Gastrocnemius medialis (tissue), 4 donors: ENCODE measurements at regions of chr1 and their contacts with region 1.

Region 1: DNA sequence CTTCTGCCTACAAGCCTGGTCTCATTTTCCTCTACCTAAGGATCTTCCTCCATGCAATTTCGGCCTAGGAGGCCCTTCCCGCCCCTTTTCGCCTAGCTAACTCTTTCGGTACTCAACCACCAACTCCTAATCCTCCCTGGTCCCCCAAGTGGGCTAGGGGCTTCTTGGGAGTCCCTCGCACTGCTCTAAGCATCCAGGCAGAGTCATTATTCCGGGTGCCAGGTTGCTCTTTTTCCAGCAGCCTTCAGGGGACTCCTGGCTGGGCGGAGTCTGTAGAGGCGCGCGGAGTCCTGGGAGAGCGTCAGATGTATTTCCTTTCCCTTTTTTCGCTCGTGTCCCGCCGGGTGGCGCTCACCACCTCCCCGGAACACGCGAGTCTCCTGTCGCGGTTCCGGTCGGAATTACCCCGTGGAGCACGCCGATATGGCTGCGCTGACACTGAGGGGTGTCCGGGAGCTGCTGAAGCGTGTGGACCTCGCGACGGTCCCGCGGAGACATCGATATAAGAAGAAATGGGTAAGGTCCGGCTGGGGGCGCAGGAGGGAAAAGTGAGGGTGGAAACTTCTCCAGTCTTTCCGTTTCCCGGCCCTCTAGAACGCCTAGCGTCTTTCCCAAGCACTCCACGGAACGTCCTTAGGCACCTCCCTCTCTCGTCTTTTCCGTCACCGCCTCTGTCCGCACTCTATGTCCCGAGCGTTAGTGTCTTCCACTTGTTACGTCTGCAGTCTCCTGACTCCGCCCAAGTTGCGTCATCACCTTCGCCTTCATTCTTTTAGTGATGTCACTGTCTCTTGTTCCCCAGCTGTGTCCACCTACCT is at the start of gene NSUN4:
- DNase-seq: peak; percentile 88 to 93
- ATAC-seq: peak; percentile 94 to 96
- H3K4me3 ChIP-seq: peak within 1 kb of the TSS; percentile 66 to 83 (median 77)
- H3K27ac ChIP-seq: peak within 1 kb of the TSS; percentile 91 to 99 (median 94)
- H3K4me1 ChIP-seq: peaks cover 16 to 20% of the 10 kb centered on the region in 2 donors
- H3K27me3 ChIP-seq: no peaks in the 10 kb centered on the region
- CTCF ChIP-seq: peak; percentile 51 to 73 (median 62)
- POLR2A ChIP-seq: peak; percentile 86 to 89
- total RNA-seq, gene NSUN4: 15.5 to 22.5 (median 20.8) TPM

Region 2: DNA sequence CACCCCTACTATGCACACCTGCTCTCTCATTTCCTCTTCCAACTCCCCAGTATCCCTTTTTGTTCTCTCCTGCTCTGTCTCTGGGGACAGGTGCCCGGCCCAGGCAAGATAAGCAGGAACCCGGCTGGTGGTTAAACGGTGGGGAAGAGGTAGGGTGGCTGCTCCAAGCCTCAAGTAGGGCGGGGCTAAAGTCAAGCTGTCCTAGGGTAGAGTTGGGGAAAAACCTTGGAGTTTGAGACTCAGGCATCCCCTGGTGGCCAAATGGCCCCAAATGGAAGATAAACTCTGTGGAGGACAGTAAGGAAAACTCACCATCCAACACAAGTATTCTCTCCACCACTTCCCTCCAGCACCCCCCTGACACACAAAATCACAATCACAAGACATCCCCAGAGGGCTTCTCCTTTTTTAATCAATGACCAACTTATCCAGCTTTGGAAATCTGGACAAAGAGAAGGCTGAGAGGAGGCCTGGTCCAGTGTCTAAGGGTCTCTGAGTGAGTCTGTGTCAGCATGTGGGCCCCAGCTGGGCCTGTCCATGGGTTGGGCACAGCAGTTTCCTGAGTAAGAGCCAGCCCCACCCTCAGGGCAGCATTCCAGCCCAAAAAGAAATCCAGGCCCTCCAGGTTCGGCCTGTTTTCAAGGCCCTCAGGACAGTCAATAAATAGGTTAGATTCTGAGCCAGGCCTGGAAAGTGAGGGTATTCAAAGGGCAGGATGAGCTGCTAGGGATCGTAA is 152.2 kb before region 1 on chr1:
- in situ Hi-C with region 1: no loop called
- intact Hi-C with region 1: no loop called
- DNase-seq: no peak
- ATAC-seq: no peak
- H3K4me3 ChIP-seq: no peak overlapping the region
- H3K27ac ChIP-seq: peak overlapping the region in 3 of 4 donors; percentile 10 to 55 (median 37)
- H3K4me1 ChIP-seq: peaks cover 6 to 24% of the 10 kb centered on the region in 2 donors
- H3K27me3 ChIP-seq: no peaks in the 10 kb centered on the region
- CTCF ChIP-seq: no peak
- POLR2A ChIP-seq: no peak

Region 3: GRCh38 chr1:46247436-46248121 is 93.0 kb before region 1 on chr1 and contains the start of gene RAD54L:
- in situ Hi-C with region 1: no loop called
- intact Hi-C with region 1: loop called (anchors 2 kb)
- DNase-seq: peak; percentile 98
- ATAC-seq: peak; percentile 97 to 99
- H3K4me3 ChIP-seq: peak within 1 kb of the TSS; percentile 66 to 80 (median 76)
- H3K27ac ChIP-seq: peak within 1 kb of the TSS; percentile 67 to 75 (median 72)
- H3K4me1 ChIP-seq: peaks cover 8 to 10% of the 10 kb centered on the region in 2 donors
- H3K27me3 ChIP-seq: no peaks in the 10 kb centered on the region
- CTCF ChIP-seq: no peak
- POLR2A ChIP-seq: no peak
- total RNA-seq, gene RAD54L: 1.1 TPM in 1 of 4 donors, not detected in the others

Region 4: DNA sequence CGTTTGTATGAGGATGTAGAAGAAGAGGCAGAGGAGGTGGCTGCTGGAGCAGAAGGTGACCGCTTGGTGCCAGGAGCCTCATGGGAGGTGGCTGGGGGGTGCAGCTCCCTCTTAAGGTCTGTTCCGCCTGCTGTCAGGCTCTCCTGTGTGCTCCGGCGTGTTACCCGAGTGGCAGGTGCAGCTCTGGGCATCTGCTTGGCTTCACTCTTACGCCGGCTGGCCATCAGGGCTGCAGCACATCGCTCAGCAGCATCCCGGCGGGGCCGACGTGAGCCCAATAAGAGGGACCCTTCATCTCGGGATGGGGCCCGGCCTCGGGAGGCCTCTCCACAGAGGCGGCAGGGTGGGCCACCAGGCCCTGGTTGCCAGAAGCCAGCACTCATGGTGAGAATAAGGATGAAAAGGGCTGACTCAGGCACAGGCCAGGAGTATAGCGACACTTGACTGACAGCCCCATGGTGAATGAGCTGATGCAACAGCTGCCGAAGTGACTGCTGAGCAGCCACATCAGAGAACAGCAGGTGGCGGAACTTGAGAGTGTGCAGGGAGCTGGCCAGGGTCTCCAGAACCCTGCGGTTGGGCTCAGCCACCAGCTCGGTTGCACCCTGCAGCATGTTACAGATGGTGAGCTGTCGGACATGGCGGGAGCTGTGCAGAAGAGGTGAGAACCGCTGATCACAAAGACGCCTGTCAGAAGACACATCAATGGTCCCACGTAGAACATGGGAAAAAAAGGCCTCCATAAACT is 54.7 kb before region 1 on chr1:
- in situ Hi-C with region 1: no loop called
- intact Hi-C with region 1: loop called (anchors 5 kb)
- DNase-seq: peak; percentile 87 to 94
- ATAC-seq: peak; percentile 97
- H3K4me3 ChIP-seq: no peak overlapping the region
- H3K27ac ChIP-seq: peak overlapping the region; percentile 83 to 93 (median 86)
- H3K4me1 ChIP-seq: peaks cover 24 to 46% of the 10 kb centered on the region in 2 donors
- H3K27me3 ChIP-seq: no peaks in the 10 kb centered on the region
- CTCF ChIP-seq: peak in 4 of 5 experiments; percentile 14 to 34 (median 24)
- POLR2A ChIP-seq: no peak

Region 5: GRCh38 chr1:46303038-46303871 is 37.4 kb before region 1 on chr1 and contains the starts of genes LRRC41 and UQCRH:
- in situ Hi-C with region 1: no loop called
- intact Hi-C with region 1: loop called (anchors 1 kb)
- DNase-seq: peak; percentile 95 to 97
- ATAC-seq: peak; percentile 91 to 95
- H3K4me3 ChIP-seq: peak within 1 kb of the TSS; percentile 83 to 96 (median 90)
- H3K27ac ChIP-seq: peak within 1 kb of the TSS; percentile 97 to 99 (median 98)
- H3K4me1 ChIP-seq: peaks cover 54 to 71% of the 10 kb centered on the region in 2 donors
- H3K27me3 ChIP-seq: no peaks in the 10 kb centered on the region
- CTCF ChIP-seq: peak in 1 of 5 experiments; percentile 10
- POLR2A ChIP-seq: peak; percentile 67 to 75
- total RNA-seq, gene LRRC41: 76.3 to 99.2 (median 77.9) TPM
- total RNA-seq, gene UQCRH: 415 to 695 (median 493) TPM

Region 6: GRCh38 chr1:46547481-46548383 is 207.1 kb after region 1 on chr1:
- in situ Hi-C with region 1: no loop called
- intact Hi-C with region 1: no loop called
- DNase-seq: no peak
- ATAC-seq: no peak
- H3K4me3 ChIP-seq: no peak overlapping the region
- H3K27ac ChIP-seq: no peak overlapping the region
- H3K4me1 ChIP-seq: no peaks in the 10 kb centered on the region
- H3K27me3 ChIP-seq: peaks cover 20 to 30% (median 26%) of the 10 kb centered on the region in 3 donors
- CTCF ChIP-seq: peak in 3 of 5 experiments; percentile 36 to 41 (median 41)
- POLR2A ChIP-seq: no peak

Region 7: DNA sequence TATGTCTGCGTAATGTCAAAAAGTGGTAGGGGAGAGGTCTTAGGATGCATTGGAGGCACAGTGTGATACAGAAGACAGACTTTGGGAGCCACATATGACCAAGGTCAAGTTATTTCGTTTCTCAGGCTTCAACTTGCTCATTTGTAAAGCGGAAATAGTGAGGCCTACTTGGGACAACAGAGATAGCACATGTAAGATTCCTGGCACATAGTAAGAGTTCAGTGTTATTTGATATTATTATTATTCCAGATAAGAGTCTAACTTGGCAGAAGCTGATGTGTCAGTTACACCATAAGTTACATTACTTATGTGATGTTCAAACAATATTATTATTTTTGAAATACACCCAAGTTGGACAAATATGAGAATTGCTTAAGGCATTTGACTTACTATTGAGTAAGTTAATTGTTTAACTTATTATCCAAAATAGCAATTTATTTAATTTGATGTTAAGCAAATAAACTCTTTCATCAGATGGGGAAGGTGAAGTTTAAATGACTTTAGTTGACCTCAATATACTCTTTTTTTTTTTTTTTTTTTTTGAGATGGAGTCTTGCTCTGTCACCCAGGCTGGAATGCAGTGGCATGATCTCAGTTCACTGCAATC is 672.7 kb after region 1 on chr1:
- in situ Hi-C with region 1: no loop called
- intact Hi-C with region 1: no loop called
- DNase-seq: no peak
- ATAC-seq: no peak
- H3K4me3 ChIP-seq: no peak overlapping the region
- H3K27ac ChIP-seq: no peak overlapping the region
- H3K4me1 ChIP-seq: no peaks in the 10 kb centered on the region
- H3K27me3 ChIP-seq: no peaks in the 10 kb centered on the region
- CTCF ChIP-seq: no peak
- POLR2A ChIP-seq: no peak